Esophagus muscularis mucosa (tissue), 4 donors: ENCODE measurements at regions of chr10 and their contacts with region 1.

Region 1: GRCh38 chr10:87850742-87851205 is 12.6 kb downstream of the KLLN start:
- DNase-seq: no peak
- H3K4me3 ChIP-seq: no peak overlapping the region
- H3K27ac ChIP-seq: no peak overlapping the region
- H3K4me1 ChIP-seq: peaks cover 0 to 8% (median 3%) of the 10 kb centered on the region in 4 donors
- H3K27me3 ChIP-seq: no peaks in the 10 kb centered on the region
- CTCF ChIP-seq: peak; percentile 69 to 83 (median 80)
- EP300 ChIP-seq: no peak
- POLR2A ChIP-seq: no peak

Region 2: DNA sequence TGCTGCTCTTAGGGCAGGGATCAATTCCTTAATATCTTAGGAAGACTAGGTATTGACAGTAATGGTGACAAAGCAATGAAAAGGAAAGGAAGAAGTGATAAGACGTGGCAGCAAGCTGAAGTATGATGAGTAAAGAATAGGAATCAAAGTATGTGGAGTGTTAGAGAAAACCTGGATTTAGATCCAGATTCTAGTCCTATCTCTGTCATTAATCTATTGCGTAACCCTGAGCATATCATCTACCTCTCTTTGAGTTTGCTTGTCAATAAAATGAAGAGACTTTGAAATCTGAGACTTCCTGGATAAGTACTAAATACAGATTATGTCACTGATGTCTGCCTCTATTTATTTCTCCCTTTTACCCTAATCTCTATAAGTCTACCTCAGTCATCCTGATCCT is 101.8 kb after region 1 on chr10:
- intact Hi-C with region 1: no loop called
- DNase-seq: no peak
- H3K4me3 ChIP-seq: no peak overlapping the region
- H3K27ac ChIP-seq: no peak overlapping the region
- H3K4me1 ChIP-seq: peaks cover 0 to 8% (median 7%) of the 10 kb centered on the region in 4 donors
- H3K27me3 ChIP-seq: no peaks in the 10 kb centered on the region
- CTCF ChIP-seq: no peak
- EP300 ChIP-seq: no peak
- POLR2A ChIP-seq: no peak

Region 3: GRCh38 chr10:88117869-88118632 is 267.3 kb after region 1 on chr10:
- intact Hi-C with region 1: loop called (anchors 5 kb)
- DNase-seq: no peak
- H3K4me3 ChIP-seq: no peak overlapping the region
- H3K27ac ChIP-seq: no peak overlapping the region
- H3K4me1 ChIP-seq: no peaks in the 10 kb centered on the region
- H3K27me3 ChIP-seq: peaks cover 0 to 4% (median 0%) of the 10 kb centered on the region in 4 donors
- CTCF ChIP-seq: no peak
- EP300 ChIP-seq: no peak
- POLR2A ChIP-seq: no peak

Region 4: DNA sequence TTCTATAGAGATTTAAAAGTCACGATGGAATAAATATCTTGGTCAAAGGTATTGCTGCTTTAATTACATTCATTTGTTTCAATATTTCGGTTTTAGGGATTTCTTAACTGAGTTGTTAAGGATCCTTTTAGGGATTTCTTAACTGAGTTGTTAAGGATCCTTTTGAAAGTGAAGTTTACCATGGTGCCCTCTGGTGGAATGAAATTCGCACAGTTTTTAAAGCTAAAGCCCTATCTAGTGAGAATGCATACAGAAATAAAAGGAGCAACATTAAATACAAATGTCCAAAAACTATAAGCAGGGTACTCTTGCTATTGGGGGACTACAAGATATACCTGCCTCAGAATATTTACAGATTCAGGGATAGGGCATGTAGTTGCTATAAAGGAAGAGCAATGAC is 538.7 kb after region 1 on chr10:
- intact Hi-C with region 1: loop called (anchors 2 kb)
- DNase-seq: no peak
- H3K4me3 ChIP-seq: no peak overlapping the region
- H3K27ac ChIP-seq: no peak overlapping the region
- H3K4me1 ChIP-seq: peaks cover 18 to 40% (median 28%) of the 10 kb centered on the region in 4 donors
- H3K27me3 ChIP-seq: no peaks in the 10 kb centered on the region
- CTCF ChIP-seq: peak; percentile 45 to 67 (median 56)
- EP300 ChIP-seq: no peak
- POLR2A ChIP-seq: no peak

Region 5: DNA sequence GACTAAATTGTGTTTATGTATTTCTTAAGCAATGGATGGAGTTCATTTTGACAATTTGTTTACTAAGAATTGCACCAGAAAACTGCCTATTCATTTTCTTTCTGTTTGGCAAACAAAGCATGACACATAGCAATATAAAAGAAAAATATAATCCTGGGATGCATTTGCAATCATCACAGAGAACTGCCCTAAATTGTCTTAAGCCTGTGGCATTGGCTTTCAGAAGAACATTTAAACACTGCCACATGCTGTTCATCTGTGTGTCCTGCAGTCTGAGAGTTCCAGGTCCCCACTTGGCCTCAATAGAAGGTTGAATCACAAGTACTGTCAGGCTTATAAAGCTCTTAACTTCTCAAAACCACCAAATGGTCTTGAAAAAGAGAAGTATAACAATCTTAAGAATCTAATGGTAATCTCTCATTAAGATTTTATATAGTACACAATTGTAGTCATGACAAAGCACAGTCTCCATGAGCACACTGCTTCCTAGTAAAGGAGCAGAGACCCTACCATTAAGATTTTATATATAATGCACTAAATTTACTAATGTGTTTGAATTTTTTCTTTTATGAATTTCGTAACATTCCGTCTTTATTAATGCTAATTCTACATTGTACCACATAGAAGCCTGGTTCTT is 702.5 kb after region 1 on chr10:
- intact Hi-C with region 1: loop called (anchors 5 kb)
- DNase-seq: no peak
- H3K4me3 ChIP-seq: no peak overlapping the region
- H3K27ac ChIP-seq: no peak overlapping the region
- H3K4me1 ChIP-seq: no peaks in the 10 kb centered on the region
- H3K27me3 ChIP-seq: no peaks in the 10 kb centered on the region
- CTCF ChIP-seq: peak; percentile 74 to 79 (median 79)
- EP300 ChIP-seq: no peak
- POLR2A ChIP-seq: no peak